Astrocyte of the cerebellum (primary cell): ENCODE measurements at regions of chr22 and their contacts with region 1.

Region 1: DNA sequence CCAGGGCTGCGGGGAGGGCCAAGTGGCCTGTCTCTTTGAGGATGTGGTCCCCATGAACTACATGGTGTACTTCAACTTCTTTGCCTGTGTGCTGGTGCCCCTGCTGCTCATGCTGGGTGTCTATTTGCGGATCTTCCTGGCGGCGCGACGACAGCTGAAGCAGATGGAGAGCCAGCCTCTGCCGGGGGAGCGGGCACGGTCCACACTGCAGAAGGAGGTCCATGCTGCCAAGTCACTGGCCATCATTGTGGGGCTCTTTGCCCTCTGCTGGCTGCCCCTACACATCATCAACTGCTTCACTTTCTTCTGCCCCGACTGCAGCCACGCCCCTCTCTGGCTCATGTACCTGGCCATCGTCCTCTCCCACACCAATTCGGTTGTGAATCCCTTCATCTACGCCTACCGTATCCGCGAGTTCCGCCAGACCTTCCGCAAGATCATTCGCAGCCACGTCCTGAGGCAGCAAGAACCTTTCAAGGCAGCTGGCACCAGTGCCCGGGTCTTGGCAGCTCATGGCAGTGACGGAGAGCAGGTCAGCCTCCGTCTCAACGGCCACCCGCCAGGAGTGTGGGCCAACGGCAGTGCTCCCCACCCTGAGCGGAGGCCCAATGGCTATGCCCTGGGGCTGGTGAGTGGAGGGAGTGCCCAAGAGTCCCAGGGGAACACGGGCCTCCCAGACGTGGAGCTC is 13.5 kb downstream of the ADORA2A start:
- DNase-seq: no peak
- H3K4me3 ChIP-seq: no peak overlapping the region
- CTCF ChIP-seq: no peak

Region 2: GRCh38 chr22:24341627-24342026 is 99.2 kb before region 1 on chr22:
- in situ Hi-C with region 1: no loop called
- DNase-seq: no peak
- H3K4me3 ChIP-seq: no peak overlapping the region
- CTCF ChIP-seq: no peak

Region 3: DNA sequence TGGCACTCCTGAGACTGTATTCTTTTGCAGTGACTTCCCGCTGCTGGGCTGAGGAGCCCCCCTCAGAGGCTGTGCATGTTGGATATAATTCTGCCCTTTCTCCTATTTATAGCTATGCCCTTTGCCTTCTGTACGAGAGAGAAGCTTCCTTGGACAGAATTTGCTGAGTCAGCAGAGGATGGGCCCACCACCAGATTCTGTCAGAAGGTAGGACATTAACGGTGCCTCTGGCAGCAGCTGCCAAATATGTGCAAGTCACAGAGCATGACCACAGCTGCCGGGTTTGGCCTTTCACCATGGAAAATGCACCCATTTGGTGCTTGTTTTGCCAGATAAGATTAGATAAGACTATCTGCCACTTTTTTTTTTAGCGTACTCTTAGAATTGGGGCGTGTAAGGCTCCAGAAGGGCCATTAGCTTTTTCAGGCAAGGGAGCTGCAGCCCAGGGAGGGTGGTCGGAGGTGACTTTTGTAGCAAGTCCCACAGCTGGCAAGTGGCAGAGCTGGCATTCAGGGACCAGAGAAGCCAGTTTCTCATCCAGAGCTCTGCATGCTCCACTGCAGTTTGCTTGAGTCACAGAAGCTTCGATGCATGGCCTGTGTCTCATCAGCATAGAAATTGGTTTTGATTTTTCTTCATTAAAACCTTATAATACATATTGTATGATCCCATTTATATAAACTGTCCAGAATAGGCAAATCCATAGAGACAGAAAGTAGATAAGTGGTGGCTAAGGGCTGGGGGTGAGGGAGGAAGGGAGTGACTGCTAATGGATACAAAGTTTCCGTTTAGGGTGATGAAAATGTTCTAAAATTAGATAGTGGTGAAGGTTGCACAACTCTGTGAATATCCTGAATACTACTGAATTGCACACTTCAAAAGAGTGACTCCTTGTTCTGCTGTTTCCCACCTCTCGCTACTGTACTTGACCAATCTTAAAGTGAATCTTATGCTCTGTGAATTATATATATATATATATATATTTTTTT is 70.1 kb after region 1 on chr22:
- in situ Hi-C with region 1: loop called (anchors 5 kb)
- DNase-seq: no peak
- H3K4me3 ChIP-seq: no peak overlapping the region
- CTCF ChIP-seq: no peak

Region 4: DNA sequence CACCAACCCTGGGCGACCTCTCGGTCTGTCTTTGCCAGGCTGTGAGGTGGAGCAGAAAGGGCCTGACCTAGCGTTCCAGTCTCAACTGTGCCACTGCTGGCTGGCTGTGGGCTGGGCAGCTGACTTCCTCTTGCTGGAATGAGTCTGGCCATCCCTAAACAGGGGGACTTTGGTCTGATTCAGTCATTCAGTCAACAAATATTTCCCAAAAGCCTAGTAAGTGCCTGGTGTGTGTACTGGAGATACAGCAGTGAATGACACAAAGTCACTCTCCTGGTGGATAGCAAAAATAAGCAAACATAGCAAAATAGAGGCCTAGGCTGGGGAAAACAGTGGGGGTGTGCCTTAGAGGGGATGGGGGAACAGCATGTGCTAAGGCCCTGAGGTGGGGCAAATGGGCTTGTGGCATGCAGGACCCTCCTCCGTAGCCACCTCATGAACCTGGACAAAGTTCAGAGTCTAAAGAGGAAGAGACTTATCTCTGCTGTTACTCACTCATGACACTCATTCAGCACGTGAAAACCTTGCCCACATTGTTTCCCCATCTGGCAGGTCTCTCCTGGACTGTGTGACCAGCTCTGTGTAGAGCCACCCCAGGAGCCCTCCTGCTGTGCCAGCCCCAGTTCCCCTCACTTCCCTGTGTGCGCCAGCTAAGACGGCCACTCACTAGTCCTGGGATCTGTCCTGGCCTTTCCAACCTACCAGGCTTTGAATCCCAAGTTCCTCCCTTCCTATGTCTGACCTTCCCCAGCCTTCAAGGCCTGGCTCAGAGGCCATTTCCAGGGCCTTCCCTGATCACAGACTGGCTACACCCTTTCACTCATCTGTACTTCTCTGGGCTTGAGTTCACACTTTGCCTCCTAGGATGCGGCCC is 109.4 kb after region 1 on chr22:
- in situ Hi-C with region 1: no loop called
- DNase-seq: no peak
- H3K4me3 ChIP-seq: no peak overlapping the region
- CTCF ChIP-seq: no peak